MCF 10A (cell line): ENCODE measurements at regions of chr6 and their contacts with region 1.

Region 1: GRCh38 chr6:53651764-53652401 is 13.7 kb downstream of the KLHL31 start:
- DNase-seq: peak; percentile 86
- H3K4me3 Mint-ChIP-seq: peak overlapping the region; percentile 94
- H3K27ac Mint-ChIP-seq: peak overlapping the region; percentile 84
- H3K4me1 Mint-ChIP-seq: peaks cover 34% of the 10 kb centered on the region
- H3K27me3 Mint-ChIP-seq: no peaks in the 10 kb centered on the region
- CTCF ChIP-seq: peak; percentile 23

Region 2: GRCh38 chr6:53322188-53323029 is 329.5 kb before region 1 on chr6:
- CTCF ChIA-PET with region 1: no interaction called
- POLR2A ChIA-PET with region 1: no interaction called
- intact Hi-C with region 1: no loop called
- DNase-seq: no peak
- H3K4me3 Mint-ChIP-seq: no peak overlapping the region
- H3K27ac Mint-ChIP-seq: peak overlapping the region; percentile 28
- H3K4me1 Mint-ChIP-seq: peaks cover 40% of the 10 kb centered on the region
- H3K27me3 Mint-ChIP-seq: no peaks in the 10 kb centered on the region
- CTCF ChIP-seq: no peak

Region 3: DNA sequence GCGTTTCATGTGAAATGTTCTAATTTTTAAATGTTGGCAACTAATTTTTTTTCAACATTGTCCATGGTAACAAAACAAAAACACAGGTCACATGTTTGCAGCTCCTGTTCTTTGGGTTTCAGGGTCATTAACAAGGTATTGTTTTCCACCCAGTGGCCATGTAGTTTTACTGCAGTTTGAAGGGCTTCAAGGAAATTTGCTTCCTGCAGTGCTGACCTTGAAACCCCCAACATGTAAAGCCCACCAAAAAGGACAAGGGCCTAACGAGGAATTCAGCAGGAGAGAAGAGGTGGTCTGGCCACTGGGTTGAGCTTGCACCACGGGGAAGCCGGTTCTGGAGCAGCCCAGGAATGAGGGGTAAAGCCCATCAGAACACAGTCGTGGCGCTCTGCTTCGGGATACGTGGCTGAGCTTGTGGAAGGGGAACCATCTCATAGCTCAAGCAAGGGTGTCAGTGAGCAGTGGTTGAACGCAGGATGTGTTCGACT is 27.6 kb after region 1 on chr6:
- CTCF ChIA-PET with region 1: interaction called, 10 read pairs
- POLR2A ChIA-PET with region 1: no interaction called
- intact Hi-C with region 1: loop called (anchors 1 kb)
- DNase-seq: peak; percentile 58
- H3K4me3 Mint-ChIP-seq: no peak overlapping the region
- H3K27ac Mint-ChIP-seq: peak overlapping the region; percentile 37
- H3K4me1 Mint-ChIP-seq: no peaks in the 10 kb centered on the region
- H3K27me3 Mint-ChIP-seq: no peaks in the 10 kb centered on the region
- CTCF ChIP-seq: peak; percentile 35

Region 4: GRCh38 chr6:54094786-54095185 is 442.9 kb after region 1 on chr6:
- CTCF ChIA-PET with region 1: no interaction called
- POLR2A ChIA-PET with region 1: no interaction called
- intact Hi-C with region 1: no loop called
- DNase-seq: no peak
- H3K4me3 Mint-ChIP-seq: no peak overlapping the region
- H3K27ac Mint-ChIP-seq: no peak overlapping the region
- H3K4me1 Mint-ChIP-seq: no peaks in the 10 kb centered on the region
- H3K27me3 Mint-ChIP-seq: no peaks in the 10 kb centered on the region
- CTCF ChIP-seq: no peak